Caco-2 (cell line): ENCODE measurements at regions of chr13 and their contacts with region 1.

Region 1: GRCh38 chr13:21297914-21298831 is 121.7 kb downstream of the MRPL57 start:
- DNase-seq: peak; percentile 88 to 92
- H3K4me3 ChIP-seq: peak overlapping the region; percentile 88
- H3K4me3 Mint-ChIP-seq: peak overlapping the region; percentile 90
- H3K27ac Mint-ChIP-seq: peak overlapping the region; percentile 73
- H3K4me1 ChIP-seq: no peaks in the 10 kb centered on the region; the same call in 1 of the 2 replicates
- H3K4me1 Mint-ChIP-seq: peaks cover 14% of the 10 kb centered on the region
- H3K27me3 ChIP-seq: no peaks in the 10 kb centered on the region
- H3K27me3 Mint-ChIP-seq: no peaks in the 10 kb centered on the region
- CTCF ChIP-seq: peak; percentile 80 to 95

Region 2: DNA sequence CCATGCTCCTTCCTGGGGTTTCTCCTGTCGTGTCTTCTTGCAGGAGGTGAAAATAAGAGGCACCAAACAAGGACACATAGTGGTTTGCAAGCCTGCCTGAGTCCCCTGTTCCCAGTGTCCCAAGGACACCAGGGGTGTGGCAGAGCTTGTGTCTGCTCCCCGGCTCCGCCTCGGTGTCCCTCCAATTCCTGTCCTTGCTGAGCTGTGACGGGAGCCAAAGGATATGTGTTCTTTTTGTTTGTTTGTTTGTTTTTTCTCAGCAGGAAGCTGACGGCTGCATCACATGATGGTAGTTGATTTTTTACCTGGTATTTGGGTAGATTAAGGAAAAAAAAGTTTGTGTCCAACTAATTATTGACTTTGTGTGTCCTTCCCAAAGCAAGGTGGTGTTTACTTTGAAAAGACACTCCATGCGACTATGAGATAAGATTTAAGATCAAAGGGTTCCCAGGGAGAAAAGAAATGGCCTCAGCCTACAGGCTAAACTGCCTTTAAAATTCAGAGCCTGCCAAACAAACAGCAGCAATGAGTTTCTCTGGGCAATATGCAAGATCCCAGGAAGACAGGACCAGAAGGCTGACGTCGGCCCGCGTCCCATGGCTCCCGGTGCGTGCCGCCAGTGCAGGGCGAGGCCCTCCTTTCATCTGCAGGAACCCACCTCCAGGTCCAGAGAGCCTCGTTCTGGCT is 344.8 kb before region 1 on chr13:
- CTCF ChIA-PET with region 1: no interaction called
- POLR2A ChIA-PET with region 1: no interaction called
- intact Hi-C with region 1: no loop called
- DNase-seq: peak; percentile 64 to 68
- H3K4me3 ChIP-seq: no peak overlapping the region
- H3K4me3 Mint-ChIP-seq: peak overlapping the region; percentile 61
- H3K27ac Mint-ChIP-seq: peak overlapping the region; percentile 28
- H3K4me1 ChIP-seq: peaks cover 40% of the 10 kb centered on the region
- H3K4me1 Mint-ChIP-seq: peaks cover 41% of the 10 kb centered on the region
- H3K27me3 ChIP-seq: no peaks in the 10 kb centered on the region
- H3K27me3 Mint-ChIP-seq: no peaks in the 10 kb centered on the region
- CTCF ChIP-seq: no peak

Region 3: GRCh38 chr13:20989656-20990321 is 308.4 kb before region 1 on chr13:
- CTCF ChIA-PET with region 1: no interaction called
- POLR2A ChIA-PET with region 1: no interaction called
- intact Hi-C with region 1: no loop called
- DNase-seq: no peak
- H3K4me3 ChIP-seq: no peak overlapping the region
- H3K4me3 Mint-ChIP-seq: no peak overlapping the region
- H3K27ac Mint-ChIP-seq: peak overlapping the region; percentile 28
- H3K4me1 ChIP-seq: no peaks in the 10 kb centered on the region
- H3K4me1 Mint-ChIP-seq: no peaks in the 10 kb centered on the region
- H3K27me3 ChIP-seq: no peaks in the 10 kb centered on the region
- H3K27me3 Mint-ChIP-seq: no peaks in the 10 kb centered on the region
- CTCF ChIP-seq: no peak

Region 4: GRCh38 chr13:21243045-21243897 is 54.9 kb before region 1 on chr13:
- CTCF ChIA-PET with region 1: no interaction called
- POLR2A ChIA-PET with region 1: no interaction called
- intact Hi-C with region 1: no loop called
- DNase-seq: no peak
- H3K4me3 ChIP-seq: no peak overlapping the region
- H3K4me3 Mint-ChIP-seq: no peak overlapping the region
- H3K27ac Mint-ChIP-seq: no peak overlapping the region
- H3K4me1 ChIP-seq: no peaks in the 10 kb centered on the region
- H3K4me1 Mint-ChIP-seq: no peaks in the 10 kb centered on the region
- H3K27me3 ChIP-seq: no peaks in the 10 kb centered on the region
- H3K27me3 Mint-ChIP-seq: no peaks in the 10 kb centered on the region
- CTCF ChIP-seq: no peak

Region 5: DNA sequence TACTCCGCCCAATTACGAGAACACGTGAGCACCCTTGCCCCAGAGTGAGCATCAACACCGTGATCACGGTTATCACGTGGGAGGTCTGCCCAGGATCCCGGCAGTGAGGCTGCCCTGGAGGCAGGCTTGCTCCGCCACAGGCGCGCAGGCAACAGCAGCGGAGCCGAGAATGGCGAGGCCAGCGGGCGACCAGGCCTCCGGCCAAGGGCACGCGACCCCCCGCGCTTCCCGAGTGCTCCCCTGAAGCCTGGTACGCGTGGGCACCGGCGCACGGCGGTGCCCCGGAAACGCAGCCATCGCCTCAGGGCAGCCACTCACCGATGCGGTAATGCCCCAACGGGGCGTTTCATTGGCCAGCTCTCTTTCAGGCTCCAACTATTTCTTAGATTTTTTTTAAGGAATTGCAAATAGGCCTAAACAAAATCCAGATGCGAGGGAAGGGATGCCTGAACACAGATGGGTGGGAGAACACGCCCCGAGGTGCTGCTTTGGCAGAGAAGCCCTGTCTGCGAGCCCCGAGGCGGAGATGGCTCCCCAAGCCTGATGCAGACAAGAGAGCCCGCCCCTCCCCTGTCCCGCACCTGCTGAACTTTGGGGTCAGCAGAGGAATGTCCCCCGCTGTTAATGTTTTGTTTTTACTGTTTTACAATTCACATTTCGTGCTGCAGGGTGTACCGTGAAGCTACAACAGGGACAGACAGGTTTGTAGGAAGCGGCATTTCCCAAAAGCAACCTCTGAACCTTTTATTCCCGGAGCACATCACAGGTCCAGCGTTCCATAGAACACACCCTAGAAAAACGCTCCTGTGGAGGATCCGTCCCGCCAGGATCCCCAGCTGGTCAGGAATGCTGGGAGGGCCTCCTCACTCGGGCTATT is 28.2 kb after region 1 on chr13:
- CTCF ChIA-PET with region 1: interaction called, 6 read pairs
- POLR2A ChIA-PET with region 1: no interaction called
- intact Hi-C with region 1: loop called (anchors 1 kb)
- DNase-seq: peak; percentile 56 to 57
- H3K4me3 ChIP-seq: peak overlapping the region; percentile 48
- H3K4me3 Mint-ChIP-seq: peak overlapping the region; percentile 78
- H3K27ac Mint-ChIP-seq: peak overlapping the region; percentile 7
- H3K4me1 ChIP-seq: peaks cover 4% of the 10 kb centered on the region; the same call in 1 of the 2 replicates
- H3K4me1 Mint-ChIP-seq: peaks cover 6% of the 10 kb centered on the region
- H3K27me3 ChIP-seq: no peaks in the 10 kb centered on the region
- H3K27me3 Mint-ChIP-seq: no peaks in the 10 kb centered on the region
- CTCF ChIP-seq: no peak

Region 6: DNA sequence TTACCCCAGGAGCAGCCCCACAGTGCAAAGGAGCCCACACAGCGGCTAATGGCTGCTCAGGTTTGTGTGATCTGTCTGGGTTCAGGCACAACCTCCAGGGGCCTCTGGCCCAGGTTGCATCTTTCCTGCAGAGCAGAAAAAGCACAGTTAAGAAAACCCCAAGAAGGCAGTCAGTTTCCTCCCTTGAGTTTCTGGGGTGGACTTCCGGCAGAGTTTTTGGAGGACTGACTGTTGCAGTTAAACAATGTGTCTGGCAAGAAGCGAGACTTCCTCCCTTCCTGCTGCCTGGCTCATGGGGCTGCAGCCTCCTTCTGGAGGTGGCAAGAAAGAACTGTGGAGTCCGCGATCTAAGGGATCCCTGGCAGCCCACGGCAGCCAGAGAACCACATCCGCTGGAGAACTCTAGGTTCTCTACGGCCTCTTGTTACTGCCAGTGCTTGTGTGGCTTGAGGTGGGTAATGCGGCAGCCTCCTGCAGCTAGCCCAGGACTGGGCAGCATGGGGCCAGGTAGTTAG is 46.5 kb after region 1 on chr13:
- CTCF ChIA-PET with region 1: no interaction called
- POLR2A ChIA-PET with region 1: no interaction called
- intact Hi-C with region 1: no loop called
- DNase-seq: no peak
- H3K4me3 ChIP-seq: no peak overlapping the region
- H3K4me3 Mint-ChIP-seq: no peak overlapping the region
- H3K27ac Mint-ChIP-seq: no peak overlapping the region
- H3K4me1 ChIP-seq: no peaks in the 10 kb centered on the region
- H3K4me1 Mint-ChIP-seq: no peaks in the 10 kb centered on the region
- H3K27me3 ChIP-seq: no peaks in the 10 kb centered on the region
- H3K27me3 Mint-ChIP-seq: no peaks in the 10 kb centered on the region
- CTCF ChIP-seq: no peak

Region 7: DNA sequence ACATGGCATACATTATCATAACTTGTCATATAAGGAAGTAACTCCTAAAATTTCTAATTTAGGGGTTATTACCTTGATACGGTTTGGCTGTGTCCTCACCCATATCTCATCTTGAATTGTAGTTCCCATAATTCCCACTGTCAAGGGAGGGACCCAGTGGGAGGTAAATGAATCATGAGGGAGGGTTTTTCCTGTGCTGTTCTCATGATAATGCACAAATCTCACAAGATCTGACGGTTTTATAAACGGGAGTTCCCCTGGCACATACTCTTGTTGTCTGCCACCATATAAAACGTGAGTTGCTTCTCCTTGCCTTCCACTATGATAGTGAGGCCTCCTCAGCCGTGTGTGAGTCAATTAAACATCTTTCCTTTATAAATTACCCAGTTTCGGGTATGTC is 84.9 kb after region 1 on chr13:
- CTCF ChIA-PET with region 1: no interaction called
- POLR2A ChIA-PET with region 1: no interaction called
- intact Hi-C with region 1: loop called (anchors 10 kb)
- DNase-seq: no peak
- H3K4me3 ChIP-seq: no peak overlapping the region
- H3K4me3 Mint-ChIP-seq: no peak overlapping the region
- H3K27ac Mint-ChIP-seq: no peak overlapping the region
- H3K4me1 ChIP-seq: no peaks in the 10 kb centered on the region
- H3K4me1 Mint-ChIP-seq: no peaks in the 10 kb centered on the region
- H3K27me3 ChIP-seq: no peaks in the 10 kb centered on the region
- H3K27me3 Mint-ChIP-seq: no peaks in the 10 kb centered on the region
- CTCF ChIP-seq: no peak